BJ (cell line): ENCODE measurements at regions of chr11 and their contacts with region 1.

Region 1: GRCh38 chr11:73177778-73178577 is 35.9 kb upstream of the FCHSD2 start:
- DNase-seq: no peak
- H3K4me3 ChIP-seq: no peak overlapping the region
- H3K27me3 ChIP-seq: no peaks in the 10 kb centered on the region; the same call in 1 of the 2 replicates
- CTCF ChIP-seq: peak; percentile 81

Region 2: DNA sequence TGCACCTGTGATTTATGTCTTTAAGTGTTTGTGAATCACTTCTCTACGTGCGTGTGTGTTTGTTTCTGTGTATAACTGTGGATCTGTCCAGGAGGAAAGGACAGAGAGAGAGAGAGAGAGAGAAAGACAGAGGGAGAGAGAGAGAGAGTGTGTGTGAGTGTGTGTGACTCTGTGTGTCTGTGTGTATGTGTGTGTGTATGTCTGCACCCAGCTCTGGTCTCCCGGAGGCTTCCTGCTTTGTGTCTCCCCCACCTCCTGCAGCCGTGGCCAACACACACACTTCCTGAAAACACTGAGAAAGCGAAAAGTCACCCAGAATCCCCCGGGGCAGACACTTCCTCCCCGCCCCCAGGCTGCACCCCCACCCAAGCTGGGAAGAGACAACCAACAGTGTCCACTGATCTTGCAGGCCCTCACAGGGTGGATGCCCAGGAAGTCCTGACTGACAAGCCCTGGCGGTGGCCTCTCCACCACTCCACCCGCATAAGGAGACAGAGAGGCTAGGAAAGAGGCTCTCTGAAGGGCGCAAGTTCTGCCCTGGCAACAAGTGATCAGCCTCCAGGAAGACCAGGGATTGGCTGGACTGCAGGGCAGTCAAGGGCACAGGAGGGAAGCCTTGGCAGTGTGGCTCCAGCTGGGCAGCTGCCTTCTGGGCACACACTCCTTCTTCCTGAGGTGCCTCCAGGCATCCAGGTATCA is 455.8 kb before region 1 on chr11:
- CTCF ChIA-PET with region 1: interaction called, 39 read pairs
- POLR2A ChIA-PET with region 1: interaction called, 6 read pairs
- DNase-seq: peak; percentile 46
- H3K4me3 ChIP-seq: peak overlapping the region; percentile 50
- H3K27me3 ChIP-seq: no peaks in the 10 kb centered on the region
- CTCF ChIP-seq: no peak

Region 3: DNA sequence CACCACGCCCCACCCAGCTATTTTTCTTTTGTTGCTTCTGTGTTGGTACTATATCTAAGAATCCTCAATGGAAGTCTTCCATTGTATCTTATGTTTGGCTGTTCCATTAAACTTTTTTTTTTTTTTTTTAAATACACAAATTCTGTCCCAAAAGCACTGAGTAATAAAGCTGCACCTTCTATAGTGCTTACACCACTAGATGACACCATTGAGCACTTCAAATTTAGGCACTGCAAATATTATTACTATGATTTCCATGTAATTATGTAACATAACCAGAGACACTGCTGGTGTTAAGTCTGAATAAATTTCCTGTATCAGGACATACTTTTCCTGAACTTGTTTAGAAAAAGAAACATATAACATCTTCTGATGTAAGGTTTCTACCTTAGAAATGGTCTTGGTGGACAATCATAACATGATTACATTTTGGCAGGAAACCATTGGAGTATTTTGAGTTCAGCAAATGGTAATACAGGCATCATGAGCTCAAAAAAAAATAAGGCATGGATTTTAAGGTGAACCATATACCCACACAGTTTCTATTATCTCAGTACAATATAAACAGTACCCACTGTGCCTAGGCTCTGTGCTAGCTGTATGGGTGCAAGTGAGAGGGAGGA is 253.3 kb before region 1 on chr11:
- CTCF ChIA-PET with region 1: interaction called, 45 read pairs
- POLR2A ChIA-PET with region 1: no interaction called
- DNase-seq: no peak
- H3K4me3 ChIP-seq: no peak overlapping the region
- H3K27me3 ChIP-seq: no peaks in the 10 kb centered on the region
- CTCF ChIP-seq: peak; percentile 62

Region 4: DNA sequence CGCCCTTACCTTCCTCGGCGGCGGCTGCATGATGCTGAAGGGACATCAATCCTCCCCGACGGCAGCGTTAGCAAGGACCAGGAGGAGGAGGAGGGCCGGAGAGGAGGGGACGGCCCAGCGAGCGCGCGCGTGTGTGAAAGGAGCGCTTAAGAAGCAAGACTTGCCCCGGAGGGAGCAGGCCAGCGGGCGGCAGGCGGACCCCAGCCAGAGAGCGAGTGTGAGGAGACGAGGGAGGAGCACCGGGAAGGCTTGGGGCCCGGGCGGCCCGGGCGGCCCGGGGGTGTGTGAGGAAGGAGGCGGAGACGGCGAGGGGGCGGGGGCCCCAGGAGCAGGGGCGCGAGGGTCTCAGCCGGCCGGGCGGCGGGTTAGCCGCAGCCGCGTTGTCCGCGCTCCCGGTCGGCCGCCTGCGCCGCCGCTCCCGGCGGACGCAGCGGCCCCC is 36.1 kb before region 1 on chr11:
- CTCF ChIA-PET with region 1: interaction called, 23 read pairs
- POLR2A ChIA-PET with region 1: no interaction called
- DNase-seq: no peak
- H3K4me3 ChIP-seq: peak overlapping the region; percentile 95
- H3K27me3 ChIP-seq: no peaks in the 10 kb centered on the region
- CTCF ChIP-seq: 0 out of 2 replicates have a peak, but pooled peaks have one; percentile 7

Region 5: DNA sequence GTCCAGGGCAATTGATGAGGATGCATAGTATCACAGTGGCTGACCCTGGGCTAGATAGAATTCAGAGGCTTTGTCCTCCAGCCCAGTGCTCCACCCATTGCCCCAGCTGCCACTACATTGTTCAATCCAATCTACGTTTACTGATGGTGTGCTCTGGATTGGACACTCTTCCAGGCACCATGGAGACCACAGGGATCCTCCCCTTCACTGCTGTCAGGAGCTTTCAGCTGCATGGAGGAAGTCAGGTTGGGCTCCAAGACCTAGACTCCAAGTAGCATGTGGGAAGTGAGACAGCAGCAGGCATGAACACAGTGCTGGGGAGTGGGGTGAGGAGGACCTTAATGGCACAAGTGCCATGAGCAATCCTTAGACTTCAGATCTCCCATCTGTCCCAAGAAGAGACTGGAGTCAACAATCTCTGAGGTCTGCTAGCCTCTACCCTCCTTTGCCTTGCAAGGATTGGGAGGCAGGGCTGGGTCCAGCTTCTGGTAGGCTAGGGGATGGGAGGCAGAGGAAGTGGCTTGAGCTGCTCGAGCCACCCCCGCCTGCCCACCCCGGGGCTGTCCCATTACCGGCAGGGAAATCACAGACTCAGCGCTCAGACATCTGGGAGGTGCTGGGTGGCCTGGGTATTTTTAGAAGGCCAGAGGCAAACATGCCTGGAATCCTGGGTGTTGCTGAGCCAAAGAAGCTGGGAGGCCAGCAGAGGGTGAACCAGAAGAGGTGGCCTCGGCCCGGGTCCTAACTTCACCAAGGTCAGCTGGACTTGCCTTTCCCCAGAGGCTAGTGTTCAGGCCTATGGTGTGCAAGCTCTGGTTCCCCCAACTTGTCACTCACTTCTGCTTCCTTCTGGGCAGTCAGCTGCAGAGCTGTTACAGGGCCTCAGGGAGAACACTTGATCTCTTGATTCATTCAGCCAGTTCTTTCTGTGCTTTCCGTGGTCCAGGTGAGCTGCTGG is 20.6 kb before region 1 on chr11:
- CTCF ChIA-PET with region 1: interaction called, 41 read pairs
- POLR2A ChIA-PET with region 1: no interaction called
- DNase-seq: peak; percentile 43
- H3K4me3 ChIP-seq: no peak overlapping the region
- H3K27me3 ChIP-seq: no peaks in the 10 kb centered on the region
- CTCF ChIP-seq: 0 out of 2 replicates have a peak, but pooled peaks have one; percentile 5

Region 6: GRCh38 chr11:73164803-73165540 is 13.0 kb before region 1 on chr11:
- CTCF ChIA-PET with region 1: interaction called, 41 read pairs
- POLR2A ChIA-PET with region 1: interaction called, 3 read pairs
- DNase-seq: no peak
- H3K4me3 ChIP-seq: no peak overlapping the region
- H3K27me3 ChIP-seq: no peaks in the 10 kb centered on the region
- CTCF ChIP-seq: no peak

Region 7: DNA sequence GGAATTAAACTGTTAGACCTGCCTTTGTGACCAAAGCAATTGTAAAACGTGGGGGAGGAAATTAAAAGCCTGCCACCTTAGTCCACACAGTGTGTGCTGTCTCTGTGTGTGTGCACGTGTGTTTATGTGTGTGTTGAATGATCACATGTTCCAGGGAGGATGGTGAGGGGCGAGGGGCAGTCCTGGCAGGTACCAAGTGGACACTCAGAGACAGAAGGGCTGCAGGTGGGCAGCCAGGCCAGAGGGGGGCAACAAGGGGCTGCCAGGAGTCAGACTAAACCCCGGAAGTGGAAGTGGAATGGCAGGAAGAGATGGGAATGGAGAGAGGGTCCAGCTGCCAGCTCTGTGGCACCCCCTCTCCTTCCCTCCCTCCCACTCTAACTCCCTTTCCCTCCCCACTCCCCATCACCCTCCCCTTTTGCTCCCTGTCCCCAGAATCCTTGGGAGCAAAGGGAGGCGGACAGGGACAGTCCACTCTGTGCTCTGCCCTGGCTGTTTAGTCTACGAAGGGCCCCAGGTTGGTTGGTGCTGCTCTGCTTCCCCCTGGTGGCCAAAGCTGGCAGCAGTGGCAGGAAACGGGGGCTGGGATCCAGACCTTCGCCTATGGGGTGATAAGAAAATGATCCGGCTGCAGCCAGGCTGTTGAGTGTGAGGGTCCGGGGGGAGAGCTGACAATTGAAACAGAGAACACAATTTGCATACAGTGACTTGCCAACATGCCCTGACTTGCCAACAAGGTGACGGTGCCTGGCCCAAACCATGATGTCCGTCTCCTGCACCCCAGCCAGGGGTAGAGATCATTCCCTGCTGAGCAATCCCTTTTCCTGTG is 64.5 kb after region 1 on chr11:
- CTCF ChIA-PET with region 1: interaction called, 89 read pairs
- POLR2A ChIA-PET with region 1: no interaction called
- DNase-seq: no peak
- H3K4me3 ChIP-seq: no peak overlapping the region
- H3K27me3 ChIP-seq: no peaks in the 10 kb centered on the region
- CTCF ChIP-seq: peak; percentile 98